ENCODE measurements at regions of chr3 and their contacts with region 1.

Region 1: GRCh38 chr3:170740726-170741591 is 129.0 kb downstream of the RPL22L1 start:
- DNase-seq: peak; percentile 80 to 83
- H3K4me3 ChIP-seq: peak overlapping the region; percentile 23 to 26
- H3K27ac ChIP-seq: peak overlapping the region; percentile 81 to 84
- H3K4me1 ChIP-seq: peaks cover 0 to 34% (median 15%) of the 10 kb centered on the region in 4 donors
- H3K27me3 ChIP-seq: no peaks in the 10 kb centered on the region
- CTCF ChIP-seq: no peak

Region 2: DNA sequence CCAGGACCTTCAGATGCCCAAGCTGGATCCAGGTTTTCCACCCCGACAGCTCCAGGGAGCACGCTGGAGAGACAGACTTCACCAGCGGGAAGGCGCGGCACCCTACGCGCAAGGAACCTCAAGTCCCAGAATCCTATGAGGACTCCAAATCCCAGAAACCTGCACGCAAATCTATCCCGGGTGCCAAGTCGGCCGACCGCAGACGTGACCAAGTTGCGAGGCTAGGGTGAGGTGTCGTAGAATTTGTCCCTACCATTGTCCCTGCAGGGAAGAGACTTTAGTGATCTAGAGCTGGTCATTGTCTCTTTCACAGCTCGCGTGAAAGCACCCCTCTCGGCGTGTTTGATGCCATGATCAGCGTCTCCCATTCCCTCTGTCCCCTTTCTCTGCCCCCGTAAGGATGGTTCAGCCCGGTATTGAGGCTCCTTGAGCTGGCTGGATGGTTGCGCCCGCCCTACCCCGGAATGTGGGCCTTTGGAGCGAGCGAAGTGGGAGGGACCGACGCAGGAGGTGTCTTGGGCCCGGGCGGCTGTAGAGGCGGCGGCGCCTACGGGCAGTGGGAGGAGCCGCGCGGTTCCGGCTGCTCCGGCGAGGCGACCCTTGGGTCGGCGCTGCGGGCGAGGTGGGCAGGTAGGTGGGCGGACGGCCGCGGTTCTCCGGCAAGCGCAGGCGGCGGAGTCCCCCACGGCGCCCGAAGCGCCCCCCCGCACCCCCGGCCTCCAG is 518.9 kb before region 1 on chr3 and contains the start of gene PRKCI:
- intact Hi-C with region 1: loop called (anchors 10 kb)
- DNase-seq: peak; percentile 95 to 97
- H3K4me3 ChIP-seq: peak within 1 kb of the TSS; percentile 88 to 96
- H3K27ac ChIP-seq: peak within 1 kb of the TSS; percentile 93 to 95
- H3K4me1 ChIP-seq: peaks cover 0 to 37% (median 10%) of the 10 kb centered on the region in 4 donors
- H3K27me3 ChIP-seq: no peaks in the 10 kb centered on the region
- CTCF ChIP-seq: no peak

Region 3: GRCh38 chr3:170780955-170781354 is 40.0 kb after region 1 on chr3:
- intact Hi-C with region 1: no loop called
- DNase-seq: no peak
- H3K4me3 ChIP-seq: no peak overlapping the region
- H3K27ac ChIP-seq: no peak overlapping the region
- H3K4me1 ChIP-seq: no peaks in the 10 kb centered on the region
- H3K27me3 ChIP-seq: no peaks in the 10 kb centered on the region
- CTCF ChIP-seq: no peak